Left colon (tissue), 2 donors: ENCODE measurements at regions of chr13 and their contacts with region 1.

Region 1: GRCh38 chr13:98672944-98673545 is 79.4 kb downstream of the SLC15A1 start:
- DNase-seq: peak; percentile 74 to 78
- ATAC-seq: peak; percentile 95

Region 2: GRCh38 chr13:97855570-97856303 is 817.3 kb before region 1 on chr13:
- intact Hi-C with region 1: loop called in 1 of 2 experiments (anchors 10 kb)
- DNase-seq: peak in 1 of 2 donors; percentile 11
- ATAC-seq: peak; percentile 80

Region 3: GRCh38 chr13:98445340-98446233 is 227.5 kb before region 1 on chr13:
- intact Hi-C with region 1: loop called in 1 of 2 experiments (anchors 10 kb)
- DNase-seq: peak; percentile 51 to 83
- ATAC-seq: peak; percentile 78